GM13977 (cell line): ENCODE measurements at regions of chr22 and their contacts with region 1.

Region 1: GRCh38 chr22:30763815-30764686 is 69.4 kb downstream of the OSBP2 start:
- DNase-seq: peak; percentile 70
- CTCF ChIP-seq: peak; percentile 71

Region 2: GRCh38 chr22:30649430-30650007 is 114.5 kb before region 1 on chr22:
- in situ Hi-C with region 1: no loop called
- DNase-seq: peak; percentile 82
- CTCF ChIP-seq: no peak

Region 3: DNA sequence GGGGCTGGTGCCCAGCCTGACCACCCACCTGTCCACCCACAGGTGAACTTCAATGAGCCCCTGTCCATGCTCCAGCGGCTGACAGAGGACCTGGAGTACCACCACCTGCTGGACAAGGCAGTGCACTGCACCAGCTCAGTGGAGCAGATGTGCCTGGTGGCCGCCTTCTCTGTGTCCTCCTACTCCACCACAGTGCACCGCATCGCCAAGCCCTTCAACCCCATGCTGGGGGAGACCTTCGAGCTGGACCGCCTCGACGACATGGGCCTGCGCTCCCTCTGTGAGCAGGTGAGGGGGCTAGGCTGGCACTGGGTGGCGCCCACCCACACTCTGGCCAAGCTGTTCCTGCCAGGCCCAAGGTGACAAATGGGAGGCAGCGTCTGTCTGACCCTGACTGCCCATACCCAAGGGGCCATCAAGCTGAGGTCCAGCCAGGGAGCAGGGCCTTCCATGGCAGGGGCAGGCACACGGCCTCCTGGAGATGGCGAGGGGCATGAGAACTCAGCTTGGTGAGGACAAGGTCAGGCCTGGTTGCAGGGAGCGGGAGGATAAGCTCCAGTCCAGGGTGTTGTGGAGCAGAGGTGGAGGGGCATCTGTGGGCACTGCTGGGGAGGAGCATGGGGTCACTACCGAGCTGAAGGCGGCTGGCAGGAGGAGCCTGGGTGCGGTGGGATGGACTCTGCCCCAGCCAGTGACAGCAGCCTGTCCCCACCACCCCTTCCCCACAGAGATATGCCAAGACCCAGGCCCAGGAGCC is 126.8 kb after region 1 on chr22:
- in situ Hi-C with region 1: loop called (anchors 10 kb)
- DNase-seq: peak; percentile 78
- CTCF ChIP-seq: peak; percentile 74

Region 4: GRCh38 chr22:30968924-30969539 is 205.0 kb after region 1 on chr22 and contains the start of gene TUG1:
- in situ Hi-C with region 1: no loop called
- DNase-seq: peak; percentile 100
- CTCF ChIP-seq: no peak

Region 5: DNA sequence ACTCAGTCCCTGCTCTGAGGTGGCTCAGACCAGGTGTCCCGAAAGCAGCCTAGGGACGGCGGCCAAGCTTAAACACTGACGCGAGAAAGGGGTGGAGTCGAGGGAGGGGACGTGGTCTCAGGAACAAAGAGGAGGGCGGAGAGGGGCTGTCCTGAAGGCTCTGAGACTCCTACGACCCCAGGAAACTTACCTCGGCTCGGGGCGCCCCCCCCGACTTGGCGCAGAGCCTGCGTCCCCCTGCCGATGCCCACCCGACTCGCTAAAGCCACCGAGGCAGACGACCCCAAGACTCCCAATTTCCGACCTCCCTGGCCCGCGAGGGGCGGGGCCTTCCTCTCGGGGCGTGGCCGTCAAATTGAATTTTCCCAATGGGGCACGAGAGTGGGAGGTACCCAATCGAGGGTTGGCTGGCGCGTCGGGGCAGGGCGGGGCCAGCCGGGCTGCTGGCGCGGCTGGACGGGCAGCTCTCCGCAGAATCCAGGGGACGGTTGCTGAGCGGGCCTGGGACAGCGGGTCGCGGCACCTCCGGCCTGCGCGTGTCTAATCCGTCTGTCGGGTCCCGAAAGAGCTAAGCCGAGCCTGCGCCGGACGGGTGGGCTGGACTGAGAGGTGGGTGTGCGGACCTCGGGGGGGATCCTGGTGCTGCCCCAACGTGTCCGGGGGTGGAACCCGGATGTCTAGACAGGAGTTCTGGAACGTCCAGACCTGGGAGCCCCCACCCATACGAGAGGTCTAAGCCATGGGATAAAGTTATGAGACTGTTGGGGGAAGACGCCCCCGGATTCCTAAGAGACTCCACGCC is 317.0 kb after region 1 on chr22 and contains the start of gene SMTN:
- in situ Hi-C with region 1: loop called (anchors 10 kb)
- DNase-seq: peak; percentile 95
- CTCF ChIP-seq: no peak